SK-N-SH (cell line): ENCODE measurements at regions of chr7 and their contacts with region 1.

Region 1: DNA sequence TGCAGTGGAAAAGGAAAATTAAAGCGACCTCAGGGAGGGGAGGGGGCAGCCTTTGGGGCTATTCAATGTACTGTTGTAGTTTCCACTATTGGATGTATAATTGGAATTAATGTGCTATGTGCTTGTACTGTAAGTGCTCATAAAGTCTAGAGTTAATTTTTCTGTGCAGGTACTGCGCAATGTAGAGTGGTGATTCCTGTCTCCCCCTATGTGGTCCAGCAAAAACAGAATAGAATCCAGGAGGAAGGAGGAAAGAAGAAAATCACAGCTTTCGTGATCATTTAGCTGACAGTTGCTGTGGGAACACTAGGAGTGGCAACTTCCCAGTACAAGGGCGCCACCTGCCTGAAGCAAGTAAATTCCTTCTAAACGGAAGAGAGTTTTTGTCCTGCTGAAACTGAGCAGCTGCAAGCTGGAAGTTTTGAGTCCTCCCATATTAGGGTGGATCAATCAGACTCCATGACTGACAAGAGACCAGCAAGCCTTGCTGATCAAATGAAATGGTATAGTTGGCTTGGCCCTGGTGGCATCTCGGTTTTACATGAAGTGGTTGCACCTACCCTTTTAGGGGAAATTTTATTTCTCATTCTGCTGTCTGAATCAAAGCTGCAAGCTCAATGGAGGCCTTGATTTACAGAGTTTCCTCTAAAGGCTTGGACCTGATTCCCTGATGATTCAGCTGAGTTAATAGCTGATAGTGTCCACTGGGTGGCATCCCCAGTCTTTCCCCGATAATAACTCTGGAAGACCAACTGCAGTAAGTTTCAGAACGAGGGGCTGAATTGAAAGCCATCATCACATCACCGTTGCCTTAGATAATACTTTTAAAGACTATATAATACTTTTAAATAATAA is 299.8 kb downstream of the HGF start:
- DNase-seq: peak; percentile 53
- H3K4me3 ChIP-seq: no peak overlapping the region
- H3K27ac ChIP-seq: peak overlapping the region in 1 of 2 experiments; percentile 16; a peak in 1 of 4 replicates
- H3K4me1 ChIP-seq: peaks cover 0 to 10% of the 10 kb centered on the region in 2 experiments; a peak in 2 of 4 replicates
- H3K27me3 ChIP-seq: no peaks in the 10 kb centered on the region
- CTCF ChIP-seq: peak; percentile 92
- EP300 ChIP-seq: no peak
- RAD21 ChIP-seq: peak; percentile 98

Region 2: DNA sequence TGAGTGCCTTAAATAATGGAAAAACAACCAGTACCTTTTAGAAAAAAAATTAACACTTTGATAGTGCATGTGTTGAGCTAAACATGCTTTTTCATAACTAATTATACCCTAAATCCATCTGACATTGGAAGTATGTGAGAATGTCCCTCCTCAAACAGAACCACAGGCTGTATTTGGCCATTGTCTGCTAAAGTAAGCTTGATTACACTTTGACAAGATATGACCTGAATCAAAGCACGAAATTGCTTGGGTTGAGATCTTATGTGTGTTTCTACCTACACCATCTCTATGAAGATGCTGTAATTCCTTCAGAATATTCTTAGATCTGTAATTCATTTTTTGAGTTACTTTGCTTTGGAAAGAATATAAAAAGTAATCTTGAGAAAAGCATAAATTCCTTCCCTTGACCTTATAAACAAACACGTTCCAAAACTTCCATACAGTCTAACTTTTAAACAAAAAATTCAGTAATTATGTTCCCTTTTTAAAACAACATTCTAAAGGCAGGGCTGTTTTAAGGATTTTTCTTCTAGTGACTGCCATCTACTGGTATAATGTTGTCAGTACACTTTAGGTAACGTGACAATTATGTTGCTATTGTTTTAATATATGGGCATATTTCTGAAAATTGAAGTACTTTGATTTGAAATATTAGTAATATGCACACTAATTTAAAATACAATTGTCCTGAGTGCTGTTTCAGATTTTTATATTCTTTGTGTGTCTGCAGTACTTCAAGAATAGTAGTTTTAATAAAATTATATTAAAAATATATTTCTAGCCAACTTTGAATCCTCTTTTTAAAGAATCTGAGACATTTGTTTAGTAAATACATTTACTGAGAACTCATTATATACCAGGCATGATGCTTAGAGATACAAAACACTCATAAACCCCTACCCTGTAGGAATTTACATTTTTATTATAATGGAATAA is 810.7 kb before region 1 on chr7:
- CTCF ChIA-PET with region 1: interaction called, 11 read pairs
- POLR2A ChIA-PET with region 1: no interaction called
- DNase-seq: peak; percentile 31
- H3K4me3 ChIP-seq: no peak overlapping the region; a peak in 1 of 4 replicates
- H3K27ac ChIP-seq: peak overlapping the region in 1 of 2 experiments; percentile 8; a peak in 1 of 4 replicates
- H3K4me1 ChIP-seq: peaks cover 0 to 4% of the 10 kb centered on the region in 2 experiments; a peak in 1 of 4 replicates
- H3K27me3 ChIP-seq: no peaks in the 10 kb centered on the region
- CTCF ChIP-seq: peak; percentile 97
- EP300 ChIP-seq: no peak
- RAD21 ChIP-seq: peak; percentile 80

Region 3: DNA sequence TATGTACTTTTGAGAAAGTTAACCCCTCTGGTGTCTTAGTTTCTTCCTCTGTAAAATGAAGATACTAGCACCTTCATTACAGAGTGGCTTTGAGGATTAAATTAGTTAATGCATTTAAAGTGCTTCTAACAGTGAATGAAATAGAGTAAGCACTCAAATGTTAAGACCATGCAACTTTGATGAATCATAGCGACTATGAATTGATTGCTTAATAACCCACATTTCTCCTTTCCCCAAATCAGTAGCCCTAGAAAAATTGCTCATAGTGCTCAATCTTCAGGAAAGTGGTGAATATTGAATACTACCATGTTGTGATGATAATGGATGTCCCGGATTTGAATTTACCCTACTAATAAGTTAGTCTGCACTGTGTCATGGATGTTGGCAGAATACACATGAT is 783.5 kb before region 1 on chr7:
- CTCF ChIA-PET with region 1: interaction called, 21 read pairs
- POLR2A ChIA-PET with region 1: no interaction called
- DNase-seq: no peak
- H3K4me3 ChIP-seq: no peak overlapping the region
- H3K27ac ChIP-seq: no peak overlapping the region
- H3K4me1 ChIP-seq: no peaks in the 10 kb centered on the region
- H3K27me3 ChIP-seq: no peaks in the 10 kb centered on the region
- CTCF ChIP-seq: no peak
- EP300 ChIP-seq: no peak
- RAD21 ChIP-seq: no peak

Region 4: DNA sequence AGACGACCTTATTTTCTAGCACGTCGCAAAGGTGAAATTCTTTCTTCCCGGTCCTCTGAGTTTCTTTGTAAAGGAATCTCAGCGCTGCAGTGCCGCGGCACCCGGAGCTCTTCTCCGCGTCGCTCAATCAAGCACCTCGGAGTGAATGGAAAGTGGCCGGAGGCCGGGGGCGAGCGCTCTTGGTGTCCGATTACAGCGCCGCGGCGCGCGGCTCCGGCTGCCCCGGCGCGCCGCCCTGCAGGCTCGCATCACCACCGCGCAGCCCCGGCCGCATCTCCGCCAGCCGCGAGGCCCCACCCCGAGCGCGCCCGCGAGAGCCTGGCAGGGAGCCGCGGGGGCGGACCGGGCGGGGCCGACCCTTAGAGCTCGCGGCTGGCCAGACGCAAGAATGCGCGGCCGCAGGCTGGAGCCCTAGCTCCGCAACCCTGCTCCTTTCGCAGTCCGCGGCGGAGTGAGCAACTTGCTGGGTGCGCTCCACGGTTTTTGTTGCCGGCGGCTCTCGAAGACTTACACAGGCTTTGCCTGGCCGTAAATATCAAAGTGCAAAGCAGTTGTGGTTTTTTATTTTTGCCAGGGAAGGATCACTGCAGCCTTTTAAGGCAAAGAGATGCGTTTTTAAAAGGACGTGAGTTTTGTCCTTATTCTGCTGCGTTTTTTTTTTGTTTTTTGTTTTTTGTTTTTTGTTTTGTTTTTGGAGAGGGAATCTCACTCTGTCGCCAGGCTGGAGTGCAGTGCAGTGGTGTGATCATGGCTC is 551.0 kb before region 1 on chr7 and contains the start of gene SEMA3C:
- CTCF ChIA-PET with region 1: interaction called, 21 read pairs
- POLR2A ChIA-PET with region 1: interaction called, 3 read pairs
- DNase-seq: peak; percentile 99
- H3K4me3 ChIP-seq: peak within 1 kb of the TSS; percentile 83 to 96
- H3K27ac ChIP-seq: peak within 1 kb of the TSS; percentile 62 to 91
- H3K4me1 ChIP-seq: peaks cover 10 to 12% of the 10 kb centered on the region in 2 experiments; a peak in 2 of 4 replicates
- H3K27me3 ChIP-seq: no peaks in the 10 kb centered on the region
- CTCF ChIP-seq: peak; percentile 16; the same call in 1 of the 2 replicates
- EP300 ChIP-seq: peak in 1 of 2 experiments; percentile 60; a peak in 2 of 4 replicates
- RAD21 ChIP-seq: peak; percentile 53
- polyA plus RNA-seq, gene SEMA3C: 51.1 and 64.1 TPM in 2 replicates

Region 5: DNA sequence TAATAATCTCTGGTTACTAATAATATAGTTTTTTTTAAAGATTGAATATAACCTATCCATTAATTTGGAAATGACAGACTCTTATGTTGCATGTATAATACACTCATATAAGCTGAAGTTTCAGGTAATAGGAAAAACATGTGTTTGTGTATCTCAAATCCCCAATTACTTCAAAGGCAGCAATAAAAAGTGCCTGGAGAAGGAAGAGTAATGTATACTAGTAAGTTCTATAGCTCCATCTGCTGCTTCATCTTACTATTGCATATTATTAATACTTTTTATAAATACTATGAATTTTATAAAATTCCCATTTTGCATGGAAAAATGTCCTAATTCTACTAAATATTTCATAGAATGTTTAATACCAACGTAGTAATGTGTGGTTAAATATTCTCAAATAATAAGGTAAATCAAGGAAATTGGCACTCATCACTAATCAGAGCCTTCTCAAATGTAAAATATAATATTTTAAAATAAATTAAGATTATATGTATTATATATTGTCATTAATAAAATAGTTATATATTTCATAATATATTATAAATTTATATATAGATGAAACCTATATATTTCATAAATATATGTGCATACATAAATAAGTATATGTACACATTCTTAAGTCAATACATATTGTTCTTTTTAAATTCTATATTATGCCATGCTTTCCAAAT is 12.1 kb before region 1 on chr7:
- CTCF ChIA-PET with region 1: interaction called, 63 read pairs
- POLR2A ChIA-PET with region 1: no interaction called
- DNase-seq: no peak
- H3K4me3 ChIP-seq: no peak overlapping the region
- H3K27ac ChIP-seq: no peak overlapping the region
- H3K4me1 ChIP-seq: peaks cover 0 to 17% of the 10 kb centered on the region in 2 experiments; a peak in 2 of 4 replicates
- H3K27me3 ChIP-seq: no peaks in the 10 kb centered on the region
- CTCF ChIP-seq: peak; percentile 74
- EP300 ChIP-seq: no peak
- RAD21 ChIP-seq: peak; percentile 81

Region 6: GRCh38 chr7:81839708-81840369 is 369.7 kb after region 1 on chr7:
- CTCF ChIA-PET with region 1: no interaction called
- POLR2A ChIA-PET with region 1: no interaction called
- DNase-seq: no peak
- H3K4me3 ChIP-seq: no peak overlapping the region
- H3K27ac ChIP-seq: no peak overlapping the region
- H3K4me1 ChIP-seq: no peaks in the 10 kb centered on the region
- H3K27me3 ChIP-seq: no peaks in the 10 kb centered on the region
- CTCF ChIP-seq: no peak
- EP300 ChIP-seq: no peak
- RAD21 ChIP-seq: no peak

Region 7: DNA sequence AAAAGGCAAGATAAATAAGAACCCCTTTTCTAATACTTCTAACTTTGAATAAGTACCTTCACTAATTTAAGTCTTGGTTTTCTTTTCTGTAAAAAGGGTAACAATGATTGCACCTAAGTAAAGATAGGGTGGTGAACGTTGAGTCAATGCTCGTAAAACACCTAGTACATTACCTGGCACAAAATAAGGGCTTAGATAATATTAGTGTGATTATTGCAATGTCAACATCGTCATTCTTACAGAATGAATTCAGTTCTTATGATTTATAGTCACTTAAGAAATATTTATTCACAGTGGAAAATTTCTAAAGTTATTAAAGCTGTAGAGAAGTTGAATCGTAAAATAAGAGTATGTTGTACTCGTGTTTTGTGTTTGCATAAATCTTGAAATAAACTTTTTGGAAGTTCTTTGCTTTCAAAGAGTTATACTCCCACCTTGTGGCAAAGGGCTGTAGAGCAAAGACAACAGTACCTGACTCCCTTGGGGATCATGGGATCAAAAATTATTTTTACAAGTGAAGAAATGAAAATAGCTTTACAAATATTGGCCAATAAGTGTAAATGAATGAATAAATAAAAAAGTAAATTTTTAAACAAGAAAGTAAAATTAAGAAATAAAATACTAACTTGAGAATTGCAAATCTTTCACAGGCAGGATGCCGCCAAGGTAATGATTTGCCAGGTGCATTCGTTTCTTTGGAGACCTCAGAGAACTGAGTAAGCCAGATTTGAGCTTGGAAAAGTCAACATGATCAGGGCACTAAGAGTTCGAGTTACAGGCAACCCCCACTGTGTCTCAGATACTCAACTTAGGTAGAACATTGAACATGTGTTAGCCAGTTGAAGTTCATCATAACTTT is 1259.3 kb after region 1 on chr7:
- CTCF ChIA-PET with region 1: interaction called, 14 read pairs
- POLR2A ChIA-PET with region 1: no interaction called
- DNase-seq: peak; percentile 52
- H3K4me3 ChIP-seq: no peak overlapping the region; a peak in 1 of 4 replicates
- H3K27ac ChIP-seq: no peak overlapping the region
- H3K4me1 ChIP-seq: peaks cover 0 to 3% of the 10 kb centered on the region in 2 experiments; a peak in 1 of 4 replicates
- H3K27me3 ChIP-seq: no peaks in the 10 kb centered on the region
- CTCF ChIP-seq: peak; percentile 99
- EP300 ChIP-seq: no peak
- RAD21 ChIP-seq: peak; percentile 93